Posterior cingulate gyrus (tissue), 11 donors: ENCODE measurements at regions of chr1 and their contacts with region 1.

Region 1: DNA sequence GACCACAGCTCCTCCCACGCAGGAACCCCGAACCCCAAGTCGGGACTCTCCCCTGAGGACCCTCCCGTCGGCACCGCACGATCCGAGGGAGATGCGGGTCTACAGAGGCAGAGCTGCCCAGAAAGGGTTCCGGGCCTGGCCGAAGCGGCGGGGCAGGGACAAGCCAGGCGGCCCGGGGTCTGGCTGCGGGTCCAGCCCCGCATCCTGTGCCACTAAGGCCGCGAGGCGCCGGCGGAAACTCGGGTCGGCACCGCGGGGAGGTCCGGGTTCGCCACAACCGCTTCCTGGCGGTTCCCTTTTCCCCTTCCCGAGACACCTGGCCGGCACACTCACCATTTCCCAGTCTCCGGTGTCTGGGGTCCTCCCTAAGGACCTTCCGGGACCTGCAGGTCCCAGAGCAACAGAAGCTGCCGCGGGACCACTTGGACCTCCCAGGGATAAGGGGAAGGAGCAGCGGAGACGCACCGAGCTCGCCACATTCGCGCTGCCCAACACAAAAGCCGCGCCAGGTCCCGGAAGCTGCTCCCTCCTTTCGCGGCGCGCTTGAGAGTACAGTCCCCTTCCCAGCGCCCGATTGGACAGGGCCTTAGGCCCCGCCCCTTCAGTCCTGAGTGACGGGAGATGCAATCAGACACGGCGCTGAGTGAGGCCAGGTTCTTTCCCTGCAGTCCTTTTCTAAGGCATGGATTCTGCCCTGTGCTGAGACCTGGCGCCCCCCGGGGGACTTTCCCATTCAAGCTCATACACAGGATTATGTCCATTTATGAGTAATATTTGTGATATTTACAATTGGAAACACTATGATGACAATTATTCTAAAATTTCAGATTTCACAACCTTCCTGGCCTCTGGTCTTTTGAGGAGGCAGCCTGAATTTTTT is at the start of gene ZNF670:
- DNase-seq: peak; percentile 90 to 99 (median 98)

Region 2: DNA sequence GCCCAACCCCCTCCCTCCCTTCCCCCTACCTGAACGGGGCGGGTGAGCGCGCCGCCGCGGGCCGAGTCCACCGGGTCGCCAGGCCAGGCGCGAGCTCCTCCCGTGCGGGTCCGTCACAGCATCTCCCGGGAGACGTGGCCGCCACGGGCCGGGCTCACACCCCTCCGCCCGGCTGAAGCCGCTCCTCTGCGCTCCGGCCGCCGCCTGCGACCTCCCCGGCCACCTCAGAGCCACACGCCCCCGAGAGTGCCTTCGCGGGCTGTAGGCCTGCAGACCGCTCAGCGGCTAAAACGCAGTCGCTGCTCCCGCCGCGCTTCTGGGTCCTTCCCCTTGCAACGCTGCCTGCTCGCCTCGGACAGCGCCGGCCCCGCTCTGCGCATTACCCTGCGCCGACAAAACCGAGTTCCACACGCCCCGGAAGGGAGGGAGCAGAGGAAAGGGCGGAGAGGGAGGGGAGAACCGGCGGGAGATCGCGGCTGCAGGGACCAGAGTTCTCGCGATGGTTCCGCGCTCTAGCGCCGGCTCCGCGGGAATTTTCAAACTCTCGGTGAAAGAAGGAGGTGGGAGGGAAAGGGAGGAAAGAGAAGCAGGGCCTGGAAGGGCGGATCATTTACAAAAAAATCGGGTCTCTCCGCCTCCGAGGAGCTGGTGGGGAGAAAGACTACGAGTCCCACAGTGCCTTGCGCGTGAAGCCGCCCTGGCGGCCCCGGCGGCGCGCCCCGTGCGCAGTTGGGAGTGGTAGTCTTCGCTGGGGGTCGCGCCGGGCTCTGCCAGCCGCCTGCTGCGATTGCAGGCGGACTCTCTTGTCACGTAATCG is 146.7 kb before region 1 on chr1 and contains the start of gene AHCTF1:
- intact Hi-C with region 1: loop called (anchors 10 kb)
- DNase-seq: peak; percentile 93 to 99 (median 96)